GM12878 (cell line): ENCODE measurements at regions of chr7 and their contacts with region 1.

Region 1: DNA sequence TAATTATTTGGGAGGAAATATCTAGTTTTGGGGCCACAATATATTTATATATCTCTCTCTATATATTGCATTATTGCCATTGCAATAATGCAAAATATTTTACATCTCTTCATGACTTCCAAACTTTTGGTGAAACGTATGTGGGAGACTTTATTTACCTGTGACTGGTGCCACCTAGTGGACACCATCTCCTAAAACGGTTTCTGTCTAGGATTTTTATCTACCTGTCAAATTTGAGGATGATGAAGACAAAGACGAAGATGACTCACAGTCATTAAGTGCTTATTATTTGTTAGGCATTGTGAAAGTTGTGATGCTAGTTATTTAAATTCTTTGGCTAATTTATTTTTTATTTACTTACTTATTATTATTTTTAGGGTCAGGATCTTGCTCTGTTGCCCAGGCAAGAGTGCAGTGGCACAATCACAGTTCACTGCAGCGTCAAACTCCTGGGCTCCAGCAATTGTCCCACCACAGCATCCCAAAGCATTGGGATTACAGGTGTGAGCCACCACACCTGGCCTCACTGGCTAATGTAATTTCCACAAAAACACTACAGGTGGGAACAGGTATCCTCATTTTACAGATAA is 18.7 kb upstream of the CBLL1 start:
- DNase-seq: peak; percentile 12
- ATAC-seq: peak; percentile 61
- H3K4me3 ChIP-seq: no peak overlapping the region
- H3K27ac ChIP-seq: no peak overlapping the region
- H3K4me1 ChIP-seq: no peaks in the 10 kb centered on the region
- H3K27me3 ChIP-seq: no peaks in the 10 kb centered on the region
- CTCF ChIP-seq: peak; percentile 47 to 75 (median 54)
- EP300 ChIP-seq: no peak
- POLR2A ChIP-seq: no peak
- RAD21 ChIP-seq: peak; percentile 81

Region 2: GRCh38 chr7:106793015-106793975 is 932.0 kb before region 1 on chr7:
- CTCF ChIA-PET with region 1: no interaction called
- POLR2A ChIA-PET with region 1: no interaction called
- RAD21 ChIA-PET with region 1: no interaction called
- SMC1A ChIA-PET with region 1: no interaction called
- in situ Hi-C with region 1: loop called (anchors 10 kb)
- intact Hi-C with region 1: no loop called
- DNase-seq: no peak
- ATAC-seq: peak; percentile 35; the same call in 1 of the 3 replicates
- H3K4me3 ChIP-seq: no peak overlapping the region
- H3K27ac ChIP-seq: no peak overlapping the region
- H3K4me1 ChIP-seq: peaks cover 11% of the 10 kb centered on the region
- H3K27me3 ChIP-seq: no peaks in the 10 kb centered on the region; a peak in 1 of 4 replicates
- CTCF ChIP-seq: peak; percentile 51 to 66 (median 61); a peak in 5 of 6 replicates
- EP300 ChIP-seq: no peak
- POLR2A ChIP-seq: no peak
- RAD21 ChIP-seq: peak; percentile 94

Region 3: GRCh38 chr7:106947244-106947728 is 778.0 kb before region 1 on chr7:
- CTCF ChIA-PET with region 1: no interaction called
- POLR2A ChIA-PET with region 1: no interaction called
- RAD21 ChIA-PET with region 1: no interaction called
- SMC1A ChIA-PET with region 1: no interaction called
- in situ Hi-C with region 1: no loop called
- intact Hi-C with region 1: loop called (anchors 10 kb)
- DNase-seq: no peak
- ATAC-seq: peak; percentile 87
- H3K4me3 ChIP-seq: no peak overlapping the region
- H3K27ac ChIP-seq: no peak overlapping the region
- H3K4me1 ChIP-seq: no peaks in the 10 kb centered on the region
- H3K27me3 ChIP-seq: peaks cover 0 to 6% of the 10 kb centered on the region in 2 experiments; a peak in 2 of 4 replicates
- CTCF ChIP-seq: peak; percentile 53 to 55 (median 53); a peak in 5 of 6 replicates
- EP300 ChIP-seq: no peak
- POLR2A ChIP-seq: no peak
- RAD21 ChIP-seq: peak; percentile 78

Region 4: DNA sequence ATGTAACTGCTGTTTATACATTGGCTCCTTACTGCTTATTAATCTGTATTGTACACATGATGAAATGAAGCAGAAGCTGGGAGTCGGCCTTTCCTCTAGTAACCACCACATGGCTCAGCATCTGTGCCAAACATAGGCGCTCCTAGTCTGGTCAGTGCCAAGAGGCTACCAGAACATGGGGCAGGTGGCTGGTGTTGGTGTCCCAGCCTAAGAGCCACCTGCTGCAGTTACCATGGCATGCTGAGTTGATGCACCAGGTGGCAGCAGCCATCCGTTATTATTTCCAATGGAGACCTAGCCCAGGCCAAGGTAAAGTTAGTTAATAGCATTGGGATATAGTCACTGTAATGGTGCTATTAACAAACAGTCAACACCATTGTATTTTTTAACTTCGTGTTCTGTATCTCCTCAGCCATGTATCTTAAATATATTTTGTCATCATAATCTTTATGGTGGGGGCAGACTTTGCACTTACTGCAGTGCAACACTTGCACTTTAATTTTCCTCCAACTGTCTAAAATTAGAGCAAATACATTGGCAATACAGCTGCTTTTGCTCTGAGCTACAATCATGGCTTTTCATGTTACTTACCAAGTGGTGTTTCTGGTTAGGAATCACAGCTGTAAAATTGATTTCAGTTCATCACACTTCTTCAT is 523.3 kb before region 1 on chr7:
- CTCF ChIA-PET with region 1: interaction called, 13 read pairs
- POLR2A ChIA-PET with region 1: no interaction called
- RAD21 ChIA-PET with region 1: no interaction called
- SMC1A ChIA-PET with region 1: no interaction called
- in situ Hi-C with region 1: loop called (anchors 10 kb)
- intact Hi-C with region 1: loop called (anchors 1 kb)
- DNase-seq: no peak
- ATAC-seq: peak; percentile 92
- H3K4me3 ChIP-seq: no peak overlapping the region
- H3K27ac ChIP-seq: no peak overlapping the region
- H3K4me1 ChIP-seq: no peaks in the 10 kb centered on the region
- H3K27me3 ChIP-seq: no peaks in the 10 kb centered on the region
- CTCF ChIP-seq: peak; percentile 38 to 60 (median 53); a peak in 5 of 6 replicates
- EP300 ChIP-seq: no peak
- POLR2A ChIP-seq: no peak
- RAD21 ChIP-seq: peak; percentile 66

Region 5: GRCh38 chr7:107450970-107451369 is 274.3 kb before region 1 on chr7:
- CTCF ChIA-PET with region 1: no interaction called
- POLR2A ChIA-PET with region 1: no interaction called
- RAD21 ChIA-PET with region 1: interaction called, 3 read pairs
- SMC1A ChIA-PET with region 1: no interaction called
- in situ Hi-C with region 1: loop called (anchors 5 kb)
- intact Hi-C with region 1: no loop called
- DNase-seq: no peak
- ATAC-seq: no peak
- H3K4me3 ChIP-seq: no peak overlapping the region
- H3K27ac ChIP-seq: no peak overlapping the region
- H3K4me1 ChIP-seq: no peaks in the 10 kb centered on the region
- H3K27me3 ChIP-seq: no peaks in the 10 kb centered on the region
- CTCF ChIP-seq: no peak
- EP300 ChIP-seq: no peak
- POLR2A ChIP-seq: no peak
- RAD21 ChIP-seq: no peak

Region 6: GRCh38 chr7:107462740-107463444 is 262.4 kb before region 1 on chr7:
- CTCF ChIA-PET with region 1: interaction called, 63 read pairs
- POLR2A ChIA-PET with region 1: no interaction called
- RAD21 ChIA-PET with region 1: interaction called, 15 read pairs
- SMC1A ChIA-PET with region 1: interaction called, 23 read pairs
- in situ Hi-C with region 1: no loop called
- intact Hi-C with region 1: loop called (anchors 1 kb)
- DNase-seq: peak; percentile 19
- ATAC-seq: peak; percentile 90
- H3K4me3 ChIP-seq: no peak overlapping the region
- H3K27ac ChIP-seq: no peak overlapping the region
- H3K4me1 ChIP-seq: no peaks in the 10 kb centered on the region
- H3K27me3 ChIP-seq: no peaks in the 10 kb centered on the region
- CTCF ChIP-seq: peak; percentile 68 to 92 (median 76)
- EP300 ChIP-seq: no peak
- POLR2A ChIP-seq: no peak
- RAD21 ChIP-seq: peak; percentile 88

Region 7: GRCh38 chr7:107579885-107580715 is 145.1 kb before region 1 on chr7 and contains the start of gene BCAP29:
- CTCF ChIA-PET with region 1: no interaction called
- POLR2A ChIA-PET with region 1: no interaction called
- RAD21 ChIA-PET with region 1: interaction called, 3 read pairs
- SMC1A ChIA-PET with region 1: no interaction called
- in situ Hi-C with region 1: no loop called
- intact Hi-C with region 1: loop called (anchors 10 kb)
- DNase-seq: no peak
- ATAC-seq: peak; percentile 97
- H3K4me3 ChIP-seq: peak within 1 kb of the TSS; percentile 84
- H3K27ac ChIP-seq: peak within 1 kb of the TSS; percentile 70
- H3K4me1 ChIP-seq: no peaks in the 10 kb centered on the region; the same call in 1 of the 2 replicates
- H3K27me3 ChIP-seq: no peaks in the 10 kb centered on the region
- CTCF ChIP-seq: peak; percentile 16 to 28 (median 28); a peak in 4 of 6 replicates
- EP300 ChIP-seq: no peak
- POLR2A ChIP-seq: peak; percentile 87
- RAD21 ChIP-seq: peak; percentile 21; the same call in 1 of the 2 replicates
- polyA plus RNA-seq, gene BCAP29: 26.6 to 36.3 TPM